BJ (cell line): ENCODE measurements at regions of chr2 and their contacts with region 1.

Region 1: DNA sequence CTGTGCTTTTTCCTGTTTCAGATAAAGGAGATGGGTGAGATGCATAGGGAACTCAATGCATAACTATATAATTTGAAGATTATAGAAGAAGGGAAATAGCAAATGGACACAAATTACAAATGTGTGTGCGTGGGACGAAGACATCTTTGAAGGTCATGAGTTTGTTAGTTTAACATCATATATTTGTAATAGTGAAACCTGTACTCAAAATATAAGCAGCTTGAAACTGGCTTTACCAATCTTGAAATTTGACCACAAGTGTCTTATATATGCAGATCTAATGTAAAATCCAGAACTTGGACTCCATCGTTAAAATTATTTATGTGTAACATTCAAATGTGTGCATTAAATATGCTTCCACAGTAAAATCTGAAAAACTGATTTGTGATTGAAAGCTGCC is 16.4 kb upstream of the MSH2 start:
- DNase-seq: no peak
- H3K4me3 ChIP-seq: no peak overlapping the region
- H3K27me3 ChIP-seq: 0 out of 2 replicates have a peak, but pooled peaks cover 2% of the 10 kb centered on the region
- CTCF ChIP-seq: no peak

Region 2: DNA sequence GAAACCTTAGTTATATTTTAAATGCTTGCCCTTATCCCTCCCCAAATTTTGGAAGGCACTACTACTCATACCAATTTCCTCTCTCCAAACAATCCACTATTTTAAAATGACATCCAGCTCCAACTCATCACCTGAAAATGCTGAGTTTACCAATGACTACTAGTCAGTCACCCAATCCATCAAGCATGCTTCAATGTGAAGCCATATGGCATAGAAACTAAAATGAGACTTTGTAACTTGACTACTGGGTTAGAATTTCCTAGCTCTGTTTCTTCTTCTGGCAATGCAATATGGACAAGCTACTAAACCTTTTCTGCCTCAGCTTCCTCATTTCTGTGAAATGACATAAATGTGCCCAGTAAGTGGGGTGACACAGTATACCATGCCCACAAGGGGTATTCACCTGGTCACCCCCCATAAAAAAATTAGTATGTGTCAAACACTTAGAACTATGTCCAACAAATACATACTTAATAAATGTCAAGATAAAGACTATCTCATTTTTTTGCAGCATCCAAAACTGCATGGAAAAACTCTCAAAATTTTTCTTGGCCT is 221.5 kb before region 1 on chr2:
- CTCF ChIA-PET with region 1: no interaction called
- POLR2A ChIA-PET with region 1: no interaction called
- DNase-seq: no peak
- H3K4me3 ChIP-seq: no peak overlapping the region
- H3K27me3 ChIP-seq: no peaks in the 10 kb centered on the region
- CTCF ChIP-seq: no peak

Region 3: GRCh38 chr2:47334356-47335136 is 52.0 kb before region 1 on chr2:
- CTCF ChIA-PET with region 1: interaction called, 156 read pairs
- POLR2A ChIA-PET with region 1: interaction called, 3 read pairs
- DNase-seq: no peak
- H3K4me3 ChIP-seq: no peak overlapping the region
- H3K27me3 ChIP-seq: no peaks in the 10 kb centered on the region
- CTCF ChIP-seq: no peak

Region 4: GRCh38 chr2:47339745-47340541 is 46.6 kb before region 1 on chr2:
- CTCF ChIA-PET with region 1: interaction called, 156 read pairs
- POLR2A ChIA-PET with region 1: interaction called, 3 read pairs
- DNase-seq: no peak
- H3K4me3 ChIP-seq: no peak overlapping the region
- H3K27me3 ChIP-seq: no peaks in the 10 kb centered on the region
- CTCF ChIP-seq: no peak

Region 5: GRCh38 chr2:47344890-47345589 is 41.5 kb before region 1 on chr2:
- CTCF ChIA-PET with region 1: interaction called, 156 read pairs
- POLR2A ChIA-PET with region 1: no interaction called
- DNase-seq: peak; percentile 51
- H3K4me3 ChIP-seq: peak overlapping the region; percentile 27
- H3K27me3 ChIP-seq: 0 out of 2 replicates have a peak, but pooled peaks cover 2% of the 10 kb centered on the region
- CTCF ChIP-seq: peak; percentile 28; the same call in 1 of the 2 replicates